GM12878 (cell line): ENCODE measurements at regions of chr2 and their contacts with region 1.

Region 1: DNA sequence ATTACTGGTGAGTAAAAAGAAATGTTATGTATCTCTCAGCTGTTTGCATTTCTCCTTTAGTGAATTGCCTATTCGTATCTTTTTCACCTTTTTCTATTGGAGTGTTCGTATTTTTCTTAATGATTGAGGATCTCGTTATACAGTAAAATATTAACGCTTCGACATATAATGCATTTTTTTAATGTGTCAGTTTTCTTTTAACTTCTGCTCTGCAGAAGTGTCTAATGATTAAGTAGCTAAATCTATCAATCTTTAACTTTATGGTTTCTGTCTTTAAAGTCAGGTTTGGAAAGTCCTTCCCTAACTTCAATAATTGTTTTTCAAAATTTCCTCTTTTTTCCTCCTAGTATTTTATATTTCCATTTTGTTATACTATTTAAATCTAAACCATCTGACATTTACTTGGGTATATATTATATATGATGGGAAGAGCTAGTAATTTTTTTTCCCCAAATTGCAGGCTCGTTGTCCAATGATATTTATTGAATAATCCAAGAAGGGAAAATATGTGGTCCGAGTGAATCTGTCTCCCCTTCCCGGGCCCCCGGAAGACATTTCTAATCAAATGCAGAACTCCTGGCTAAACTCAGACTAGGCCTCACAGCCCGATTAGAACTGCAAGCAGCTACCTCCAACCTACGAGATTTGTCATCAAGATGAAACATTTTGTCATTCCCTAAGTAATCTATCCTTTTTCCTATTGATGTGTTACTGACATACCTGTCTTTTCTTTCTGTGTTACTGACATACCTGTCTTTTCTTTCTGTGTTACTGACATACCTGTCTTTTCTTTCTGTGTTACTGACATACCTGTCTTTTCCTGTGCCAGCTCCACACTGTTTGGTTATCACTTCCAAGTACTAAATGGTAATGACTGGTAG is 17.2 kb downstream of the PCBP1 start:
- DNase-seq: no peak
- ATAC-seq: peak; percentile 17; the same call in 2 of the 3 replicates
- H3K4me3 ChIP-seq: peak overlapping the region; percentile 53
- H3K27ac ChIP-seq: peak overlapping the region; percentile 97
- H3K4me1 ChIP-seq: peaks cover 38% of the 10 kb centered on the region
- H3K27me3 ChIP-seq: no peaks in the 10 kb centered on the region
- CTCF ChIP-seq: no peak
- EP300 ChIP-seq: no peak
- POLR2A ChIP-seq: no peak
- RAD21 ChIP-seq: 0 out of 2 replicates have a peak, but pooled peaks have one; percentile 3

Region 2: DNA sequence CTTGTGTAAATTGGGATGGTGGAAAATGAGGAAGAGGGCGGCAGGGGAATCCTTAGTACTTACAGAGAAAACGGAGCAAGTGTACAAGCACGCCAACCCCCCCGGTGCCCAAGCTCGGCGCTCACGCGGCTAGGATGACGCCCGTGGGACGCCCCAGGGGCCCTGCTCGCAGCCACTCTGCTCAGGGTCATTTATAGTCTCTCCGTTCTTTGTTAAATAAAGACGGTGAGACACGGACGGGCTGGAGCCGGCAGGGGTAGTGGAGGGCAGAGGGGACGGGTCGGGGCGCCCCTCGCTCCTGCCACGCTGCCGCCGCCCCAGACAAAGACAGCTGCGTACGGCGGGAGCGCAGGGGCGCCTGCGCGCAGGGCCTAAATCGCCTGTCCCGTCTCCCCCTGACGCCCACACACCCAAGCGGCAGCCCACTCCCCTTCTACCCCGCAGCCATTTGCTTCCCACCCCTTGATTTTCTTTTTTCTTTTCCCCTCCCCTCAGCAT is 20.6 kb after region 1 on chr2:
- CTCF ChIA-PET with region 1: interaction called, 40 read pairs
- POLR2A ChIA-PET with region 1: interaction called, 280 read pairs
- RAD21 ChIA-PET with region 1: interaction called, 234 read pairs
- SMC1A ChIA-PET with region 1: interaction called, 181 read pairs
- in situ Hi-C with region 1: no loop called
- intact Hi-C with region 1: loop called (anchors 2 kb)
- DNase-seq: no peak
- ATAC-seq: peak; percentile 61
- H3K4me3 ChIP-seq: peak overlapping the region; percentile 67
- H3K27ac ChIP-seq: peak overlapping the region; percentile 95
- H3K4me1 ChIP-seq: peaks cover 62% of the 10 kb centered on the region
- H3K27me3 ChIP-seq: no peaks in the 10 kb centered on the region
- CTCF ChIP-seq: no peak
- EP300 ChIP-seq: no peak; a peak in 1 of 4 replicates
- POLR2A ChIP-seq: peak; percentile 88
- RAD21 ChIP-seq: no peak

Region 3: DNA sequence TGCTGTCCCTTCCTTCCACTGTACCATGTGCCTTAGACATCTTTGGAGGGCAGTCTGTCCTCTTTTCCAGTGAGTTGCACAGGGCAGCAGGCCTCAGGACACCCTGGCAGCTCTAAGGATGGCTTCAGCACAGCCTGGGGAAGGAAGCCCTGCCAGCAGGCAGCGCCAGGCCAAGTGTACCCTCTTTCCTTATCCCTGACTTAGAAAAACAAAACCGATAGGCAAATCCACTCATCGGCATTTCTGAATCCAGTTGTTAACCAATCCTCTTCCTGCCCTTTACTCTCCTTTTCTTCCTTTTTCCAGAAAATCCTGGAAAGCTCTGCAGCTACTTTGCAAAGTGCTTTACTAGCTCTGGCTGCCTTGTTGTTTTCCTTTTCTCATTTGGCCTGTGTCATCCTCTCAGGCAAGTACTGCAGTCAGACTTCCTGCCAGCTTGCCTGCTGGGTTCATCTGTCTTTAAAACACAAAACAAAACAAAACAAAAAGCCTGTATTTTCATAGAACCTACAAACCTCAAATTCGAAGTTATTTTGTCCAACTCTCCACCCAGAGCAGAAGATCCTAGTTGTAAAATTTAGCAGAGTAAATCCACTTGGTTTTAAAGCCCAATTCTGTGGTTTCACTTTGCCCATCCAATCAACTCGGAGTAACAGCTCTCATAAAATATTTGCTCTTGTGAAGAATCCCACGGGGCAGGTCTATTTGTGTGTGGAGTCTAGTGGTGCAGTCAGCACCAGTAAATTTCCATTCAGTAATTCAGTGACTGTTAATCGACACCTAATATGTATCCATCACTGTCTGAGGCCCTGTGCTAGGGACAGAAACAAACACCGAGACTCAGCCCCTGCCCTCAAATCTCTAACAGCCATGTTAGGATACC is 28.0 kb after region 1 on chr2:
- CTCF ChIA-PET with region 1: interaction called, 13 read pairs
- POLR2A ChIA-PET with region 1: interaction called, 280 read pairs
- RAD21 ChIA-PET with region 1: interaction called, 234 read pairs
- SMC1A ChIA-PET with region 1: interaction called, 181 read pairs
- in situ Hi-C with region 1: no loop called
- intact Hi-C with region 1: no loop called
- DNase-seq: no peak
- ATAC-seq: peak; percentile 63
- H3K4me3 ChIP-seq: peak overlapping the region; percentile 67
- H3K27ac ChIP-seq: peak overlapping the region; percentile 99
- H3K4me1 ChIP-seq: peaks cover 49% of the 10 kb centered on the region
- H3K27me3 ChIP-seq: no peaks in the 10 kb centered on the region
- CTCF ChIP-seq: no peak
- EP300 ChIP-seq: no peak
- POLR2A ChIP-seq: peak; percentile 73
- RAD21 ChIP-seq: no peak

Region 4: DNA sequence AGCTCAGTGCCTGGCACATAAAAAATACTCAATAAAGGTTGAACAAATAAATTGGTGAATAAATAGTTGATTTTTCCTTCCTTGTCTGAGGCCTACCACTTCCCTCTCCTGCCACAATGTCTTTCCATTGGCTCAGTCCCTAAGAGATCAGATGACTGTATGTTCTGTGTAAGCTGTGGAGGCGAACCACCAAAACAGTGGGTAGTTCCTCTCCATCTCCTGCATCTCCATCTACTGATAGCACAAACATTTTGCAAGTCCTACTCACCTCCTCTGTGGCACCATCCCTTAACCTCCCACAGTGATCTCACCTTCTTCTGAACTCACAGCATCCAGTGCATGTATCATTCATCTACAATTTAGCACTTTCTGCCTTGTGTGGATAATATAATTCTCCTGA is 33.0 kb after region 1 on chr2:
- CTCF ChIA-PET with region 1: interaction called, 13 read pairs
- POLR2A ChIA-PET with region 1: interaction called, 64 read pairs
- RAD21 ChIA-PET with region 1: interaction called, 45 read pairs
- SMC1A ChIA-PET with region 1: interaction called, 123 read pairs
- in situ Hi-C with region 1: no loop called
- intact Hi-C with region 1: loop called (anchors 1 kb)
- DNase-seq: no peak
- ATAC-seq: no peak
- H3K4me3 ChIP-seq: no peak overlapping the region
- H3K27ac ChIP-seq: no peak overlapping the region
- H3K4me1 ChIP-seq: peaks cover 48% of the 10 kb centered on the region
- H3K27me3 ChIP-seq: no peaks in the 10 kb centered on the region
- CTCF ChIP-seq: no peak
- EP300 ChIP-seq: no peak
- POLR2A ChIP-seq: no peak
- RAD21 ChIP-seq: no peak